CD4-positive, alpha-beta memory T cell (primary cell): ENCODE measurements at regions of chr21 and their contacts with region 1.

Region 1: DNA sequence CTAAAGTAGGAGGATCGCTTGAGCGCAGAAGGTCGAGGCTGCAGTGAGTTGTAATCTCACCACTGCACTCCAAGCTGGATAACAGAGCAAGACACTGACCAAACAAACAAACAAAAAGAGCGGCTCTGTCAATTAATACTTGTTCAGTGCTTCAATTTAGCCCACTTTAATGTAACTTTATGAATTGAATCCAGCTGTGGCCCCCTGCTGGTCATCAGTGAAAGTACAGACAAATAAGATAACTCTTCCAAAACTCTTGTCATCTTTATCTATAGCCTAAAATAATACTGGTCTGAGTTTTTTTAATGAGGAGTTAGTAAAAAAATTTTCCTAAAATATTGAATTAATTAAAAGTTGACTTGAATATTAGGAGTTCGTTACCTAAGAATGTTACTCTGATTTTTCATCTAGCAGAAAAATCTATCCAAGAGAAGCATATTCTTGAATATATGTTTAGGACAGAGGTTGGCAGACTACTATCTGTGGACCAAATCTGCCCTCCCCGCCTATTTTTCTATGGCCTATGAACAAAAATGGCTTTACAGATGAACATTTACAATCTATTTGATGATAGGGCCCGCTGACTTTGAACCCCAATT is 26.1 kb downstream of the ATP5PF start:
- DNase-seq: peak in 4 of 5 donors; percentile 38 to 48 (median 46)
- H3K4me3 ChIP-seq: no peak overlapping the region
- H3K4me3 Mint-ChIP-seq: no peak overlapping the region
- H3K27ac ChIP-seq: no peak overlapping the region
- H3K27ac Mint-ChIP-seq: no peak overlapping the region
- H3K4me1 ChIP-seq: no peaks in the 10 kb centered on the region
- H3K4me1 Mint-ChIP-seq: no peaks in the 10 kb centered on the region
- H3K27me3 ChIP-seq: no peaks in the 10 kb centered on the region
- H3K27me3 Mint-ChIP-seq: no peaks in the 10 kb centered on the region

Region 2: DNA sequence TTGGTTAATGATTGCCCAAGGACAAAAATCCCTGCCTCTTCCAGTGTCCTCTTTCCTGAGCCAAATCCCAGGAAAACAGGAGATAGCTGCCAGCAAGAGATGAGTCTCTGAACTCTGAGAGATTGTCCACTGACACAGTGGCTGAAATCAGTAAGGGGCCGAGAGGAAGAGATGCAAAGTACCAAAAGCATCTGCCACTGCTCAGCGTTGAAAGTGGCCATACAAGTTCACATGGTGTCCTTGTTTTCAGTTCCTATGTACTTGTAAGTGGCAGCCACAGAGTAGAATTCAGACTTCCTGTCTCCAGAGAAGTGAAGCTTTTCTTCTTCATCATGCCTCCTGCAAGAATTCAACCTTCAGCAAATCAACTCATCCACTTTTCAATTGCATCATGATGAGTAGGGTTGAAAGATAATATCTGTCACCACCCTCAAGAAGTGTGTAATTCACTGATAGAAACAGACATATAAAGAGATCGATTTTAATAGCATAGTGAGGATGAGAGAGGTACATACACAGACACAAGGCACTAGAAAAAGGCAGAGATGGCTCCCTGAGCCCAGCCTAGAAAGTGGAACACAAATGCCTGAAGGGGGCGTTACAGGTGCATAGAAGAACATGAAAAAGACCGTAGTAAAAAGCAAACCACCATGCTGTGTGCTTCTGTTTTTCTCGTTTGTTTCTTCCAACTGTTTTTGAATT is 287.1 kb before region 1 on chr21:
- CTCF ChIA-PET with region 1: interaction called, 12 read pairs
- POLR2A ChIA-PET with region 1: no interaction called
- intact Hi-C with region 1: loop called (anchors 1 kb)
- DNase-seq: peak; percentile 63 to 69 (median 63)
- H3K4me3 ChIP-seq: no peak overlapping the region
- H3K4me3 Mint-ChIP-seq: peak overlapping the region in 6 of 8 donors; percentile 1 to 81 (median 36)
- H3K27ac ChIP-seq: peak overlapping the region; percentile 7
- H3K27ac Mint-ChIP-seq: peak overlapping the region; percentile 29 to 89 (median 54)
- H3K4me1 ChIP-seq: peaks cover 11% of the 10 kb centered on the region
- H3K4me1 Mint-ChIP-seq: peaks cover 6 to 11% (median 9%) of the 10 kb centered on the region in 4 donors
- H3K27me3 ChIP-seq: no peaks in the 10 kb centered on the region
- H3K27me3 Mint-ChIP-seq: no peaks in the 10 kb centered on the region

Region 3: DNA sequence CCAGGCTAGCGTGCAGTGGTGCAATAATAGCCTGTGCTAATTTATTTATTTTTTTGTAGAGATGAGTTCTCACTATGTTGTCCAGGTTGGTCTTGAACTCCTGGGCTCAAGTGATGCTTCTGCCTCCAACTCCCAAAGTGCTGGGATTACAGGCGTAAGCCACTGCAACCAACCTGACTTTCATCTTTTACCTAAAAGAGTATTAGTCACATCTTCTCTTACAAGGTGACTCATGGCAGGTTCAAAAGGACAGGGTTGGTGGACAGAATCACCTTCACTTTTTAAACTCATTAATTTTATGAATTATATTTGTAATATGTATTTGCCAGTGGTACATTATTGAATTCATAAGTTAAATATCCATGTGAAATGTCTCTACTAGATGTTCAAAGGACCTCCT is 51.4 kb before region 1 on chr21:
- CTCF ChIA-PET with region 1: no interaction called
- POLR2A ChIA-PET with region 1: no interaction called
- intact Hi-C with region 1: no loop called
- DNase-seq: no peak
- H3K4me3 ChIP-seq: no peak overlapping the region
- H3K4me3 Mint-ChIP-seq: no peak overlapping the region
- H3K27ac ChIP-seq: no peak overlapping the region
- H3K27ac Mint-ChIP-seq: no peak overlapping the region
- H3K4me1 ChIP-seq: no peaks in the 10 kb centered on the region
- H3K4me1 Mint-ChIP-seq: no peaks in the 10 kb centered on the region
- H3K27me3 ChIP-seq: no peaks in the 10 kb centered on the region
- H3K27me3 Mint-ChIP-seq: peaks cover 0 to 2% of the 10 kb centered on the region in 2 donors

Region 4: DNA sequence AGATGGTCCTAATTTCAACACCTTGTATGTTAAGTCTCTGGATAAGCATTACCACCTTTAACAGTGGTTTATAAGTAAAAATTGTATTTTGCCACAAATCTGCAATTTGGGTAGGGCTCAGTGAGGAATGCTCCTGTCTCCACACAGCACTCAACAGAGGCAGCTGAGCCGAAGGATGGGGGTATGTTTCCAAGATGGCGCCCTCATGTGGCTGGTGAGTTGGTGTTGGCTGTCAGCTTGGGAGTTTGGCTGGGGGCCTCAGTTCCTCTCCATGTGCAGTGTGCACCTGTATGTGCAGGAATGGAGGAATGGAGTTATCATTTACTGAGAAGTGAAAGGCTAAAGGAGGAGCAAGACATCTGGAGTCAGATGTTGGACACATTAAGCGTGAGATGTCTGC is 163.0 kb after region 1 on chr21:
- CTCF ChIA-PET with region 1: no interaction called
- POLR2A ChIA-PET with region 1: no interaction called
- intact Hi-C with region 1: no loop called
- DNase-seq: no peak
- H3K4me3 ChIP-seq: no peak overlapping the region
- H3K4me3 Mint-ChIP-seq: no peak overlapping the region
- H3K27ac ChIP-seq: no peak overlapping the region
- H3K27ac Mint-ChIP-seq: no peak overlapping the region
- H3K4me1 ChIP-seq: no peaks in the 10 kb centered on the region
- H3K4me1 Mint-ChIP-seq: no peaks in the 10 kb centered on the region
- H3K27me3 ChIP-seq: no peaks in the 10 kb centered on the region
- H3K27me3 Mint-ChIP-seq: peaks cover 0 to 1% of the 10 kb centered on the region in 2 donors

Region 5: GRCh38 chr21:25944672-25945213 is 236.2 kb after region 1 on chr21:
- CTCF ChIA-PET with region 1: no interaction called
- POLR2A ChIA-PET with region 1: no interaction called
- intact Hi-C with region 1: no loop called
- DNase-seq: no peak
- H3K4me3 ChIP-seq: no peak overlapping the region
- H3K4me3 Mint-ChIP-seq: no peak overlapping the region
- H3K27ac ChIP-seq: no peak overlapping the region
- H3K27ac Mint-ChIP-seq: no peak overlapping the region
- H3K4me1 ChIP-seq: no peaks in the 10 kb centered on the region
- H3K4me1 Mint-ChIP-seq: no peaks in the 10 kb centered on the region
- H3K27me3 ChIP-seq: no peaks in the 10 kb centered on the region
- H3K27me3 Mint-ChIP-seq: no peaks in the 10 kb centered on the region